Activated T-helper 2 cell treated with anti-CD3 and anti-CD28 coated beads, Interferon-gamma antibody, Interleukin-2, Interleukin-4, amounts not matched to agents 10 μg/mL and 5 μg/mL and 100 μg/mL, durations not matched to agents 14 hours and 24 hours and 36 hours (primary cell): ENCODE measurements at regions of chr12 and their contacts with region 1.

Region 1: DNA sequence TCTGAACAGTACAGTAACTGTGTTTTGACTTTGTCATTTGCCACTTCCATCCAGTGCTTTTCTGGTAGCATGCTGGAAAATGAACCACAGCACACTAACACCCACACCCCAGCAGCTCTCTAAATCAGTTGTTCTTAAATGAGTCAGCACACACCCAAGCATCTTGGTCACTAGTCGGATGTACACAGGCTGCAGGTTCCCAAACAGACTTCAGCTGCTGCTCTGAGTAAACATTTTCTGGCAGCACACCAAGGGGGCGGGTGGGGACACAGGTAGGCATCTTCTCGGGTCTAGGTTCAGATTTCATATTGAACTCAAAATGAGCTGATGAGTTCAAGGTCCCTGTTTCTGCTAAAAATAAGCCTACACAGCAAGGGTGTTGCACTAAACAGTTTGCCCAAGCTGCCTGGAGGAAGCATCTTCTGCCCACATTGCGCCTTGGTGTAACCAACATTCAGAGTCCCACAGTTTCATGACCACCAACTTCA is 39.8 kb downstream of the IFNG start:
- DNase-seq: peak; percentile 62
- H3K4me3 Mint-ChIP-seq: peak overlapping the region; percentile 11
- H3K27ac Mint-ChIP-seq: peak overlapping the region; percentile 77
- H3K4me1 Mint-ChIP-seq: peaks cover 38% of the 10 kb centered on the region
- H3K27me3 Mint-ChIP-seq: no peaks in the 10 kb centered on the region

Region 2: DNA sequence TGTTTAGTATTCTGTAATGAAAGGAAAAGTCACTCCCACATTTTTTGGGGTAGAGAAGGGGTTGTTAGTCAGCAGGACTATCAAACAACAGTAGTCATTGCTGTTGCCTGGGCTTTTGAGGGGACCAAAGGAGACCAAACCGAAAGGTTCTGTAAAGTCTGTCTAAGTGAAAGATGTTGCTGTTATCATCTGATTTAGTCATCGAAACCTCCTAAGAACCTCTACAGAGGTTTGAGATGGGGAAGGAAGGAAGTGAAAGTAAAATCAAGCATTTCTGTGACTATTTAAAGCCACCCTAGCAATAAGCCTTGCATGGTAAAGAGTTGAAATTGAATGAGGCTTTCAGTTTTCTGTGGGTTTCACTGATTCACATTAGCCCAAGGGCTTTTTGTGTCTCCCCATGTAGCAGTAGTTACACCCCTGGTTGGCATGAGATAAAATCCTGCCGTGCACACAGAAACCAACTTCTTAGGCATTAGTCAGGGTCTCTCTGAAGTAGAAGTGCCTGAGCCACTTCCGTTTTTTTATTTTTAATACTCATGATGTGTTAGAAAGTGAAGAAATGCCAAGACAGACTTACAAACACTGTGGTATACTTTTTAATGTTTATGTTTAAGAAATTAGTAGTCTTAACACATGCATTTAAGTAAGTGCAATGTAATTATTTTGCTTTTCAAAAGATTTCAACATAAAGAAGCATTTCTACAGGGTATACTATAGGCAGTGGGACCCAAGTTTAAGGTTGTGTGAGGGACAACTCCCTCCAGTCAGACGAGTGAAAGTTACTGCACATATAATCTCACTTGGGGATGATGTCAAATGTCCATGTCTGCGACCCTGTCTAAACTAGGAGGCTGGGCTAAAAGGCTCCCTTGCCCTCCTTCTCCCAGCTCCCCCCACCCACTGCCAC is 420.8 kb before region 1 on chr12:
- intact Hi-C with region 1: loop called (anchors 1 kb)
- DNase-seq: peak; percentile 56
- H3K4me3 Mint-ChIP-seq: no peak overlapping the region
- H3K27ac Mint-ChIP-seq: peak overlapping the region; percentile 55
- H3K4me1 Mint-ChIP-seq: peaks cover 46% of the 10 kb centered on the region
- H3K27me3 Mint-ChIP-seq: peaks cover 50% of the 10 kb centered on the region

Region 3: DNA sequence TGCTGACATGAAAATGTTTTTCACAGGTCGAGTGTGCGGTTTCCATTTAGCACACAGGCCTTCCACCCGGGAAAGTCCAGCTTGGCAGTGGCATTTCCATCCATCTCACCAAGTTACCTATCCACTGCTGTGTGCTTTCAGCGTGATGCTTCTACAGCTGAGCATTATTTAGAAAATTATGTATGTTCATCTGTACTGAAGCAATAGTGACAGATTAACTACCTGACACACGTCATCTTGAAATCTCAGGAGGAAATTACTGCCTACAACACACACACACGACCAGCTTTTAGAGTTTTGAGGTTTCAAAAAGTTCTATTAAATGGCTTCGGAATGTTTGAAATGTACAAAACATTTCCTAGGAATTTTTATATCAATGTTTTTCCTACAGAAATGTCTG is 91.1 kb before region 1 on chr12:
- intact Hi-C with region 1: no loop called
- DNase-seq: no peak
- H3K4me3 Mint-ChIP-seq: no peak overlapping the region
- H3K27ac Mint-ChIP-seq: no peak overlapping the region
- H3K4me1 Mint-ChIP-seq: peaks cover 19% of the 10 kb centered on the region
- H3K27me3 Mint-ChIP-seq: no peaks in the 10 kb centered on the region

Region 4: DNA sequence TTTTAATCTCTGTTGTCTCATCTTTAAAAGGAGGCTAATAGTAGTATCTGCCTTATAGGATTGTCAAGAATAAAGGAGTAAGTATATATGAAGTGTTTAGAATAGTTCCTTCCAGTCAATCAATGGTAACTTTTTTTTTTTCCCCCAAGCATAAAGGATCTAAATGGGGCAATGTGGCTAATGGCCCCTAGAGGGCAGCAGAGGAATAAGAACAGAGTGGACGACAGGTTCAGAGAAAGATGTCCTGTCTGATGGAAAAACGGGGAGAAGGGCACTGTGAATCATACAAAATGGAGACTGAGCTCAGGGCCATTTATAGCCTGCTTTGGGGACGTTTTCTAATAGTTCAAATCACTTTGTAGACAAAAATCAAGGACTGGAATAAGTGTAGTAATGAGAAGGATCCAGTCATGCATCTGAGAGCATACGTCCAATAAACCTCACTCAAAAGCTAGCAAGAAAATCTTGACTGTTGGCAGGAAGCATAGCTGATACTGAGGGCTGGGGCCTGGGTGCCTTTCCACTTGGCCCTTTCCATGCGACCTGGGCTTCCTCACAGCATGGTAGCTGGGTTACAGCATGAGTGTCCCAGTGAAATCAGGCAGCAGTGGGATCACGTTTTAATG is 79.2 kb before region 1 on chr12:
- intact Hi-C with region 1: loop called (anchors 1 kb)
- DNase-seq: peak; percentile 44
- H3K4me3 Mint-ChIP-seq: no peak overlapping the region
- H3K27ac Mint-ChIP-seq: no peak overlapping the region
- H3K4me1 Mint-ChIP-seq: peaks cover 32% of the 10 kb centered on the region
- H3K27me3 Mint-ChIP-seq: no peaks in the 10 kb centered on the region

Region 5: DNA sequence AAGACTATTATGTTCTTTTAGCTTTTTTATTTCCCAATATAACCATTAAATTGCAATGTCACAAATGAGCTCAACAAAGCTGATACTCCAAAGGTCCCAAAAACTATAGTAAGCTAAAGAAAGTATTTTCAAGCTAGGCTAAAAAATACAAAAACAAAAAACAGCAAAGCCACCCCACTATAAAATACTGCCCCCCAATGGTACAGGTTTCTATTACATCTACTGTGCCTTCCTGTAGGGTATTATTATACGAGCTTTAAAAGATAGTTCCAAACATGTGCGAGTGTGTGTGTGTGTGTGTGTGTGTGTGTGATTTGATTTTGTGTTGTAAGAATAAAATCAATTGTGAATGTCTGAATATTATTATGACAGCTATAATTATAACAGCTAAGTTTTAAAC is 38.7 kb after region 1 on chr12:
- intact Hi-C with region 1: loop called (anchors 1 kb)
- DNase-seq: no peak
- H3K4me3 Mint-ChIP-seq: peak overlapping the region; percentile 13
- H3K27ac Mint-ChIP-seq: no peak overlapping the region
- H3K4me1 Mint-ChIP-seq: peaks cover 35% of the 10 kb centered on the region
- H3K27me3 Mint-ChIP-seq: no peaks in the 10 kb centered on the region

Region 6: GRCh38 chr12:68200854-68201253 is 81.1 kb after region 1 on chr12:
- intact Hi-C with region 1: loop called (anchors 1 kb)
- DNase-seq: no peak
- H3K4me3 Mint-ChIP-seq: no peak overlapping the region
- H3K27ac Mint-ChIP-seq: no peak overlapping the region
- H3K4me1 Mint-ChIP-seq: peaks cover 42% of the 10 kb centered on the region
- H3K27me3 Mint-ChIP-seq: peaks cover 44% of the 10 kb centered on the region

Region 7: GRCh38 chr12:68451261-68452077 is 331.7 kb after region 1 on chr12:
- intact Hi-C with region 1: loop called (anchors 5 kb)
- DNase-seq: peak; percentile 55
- H3K4me3 Mint-ChIP-seq: peak overlapping the region; percentile 43
- H3K27ac Mint-ChIP-seq: peak overlapping the region; percentile 95
- H3K4me1 Mint-ChIP-seq: peaks cover 78% of the 10 kb centered on the region
- H3K27me3 Mint-ChIP-seq: no peaks in the 10 kb centered on the region

Region 8: GRCh38 chr12:68610370-68611093 is 490.8 kb after region 1 on chr12 and contains the start of gene RAP1B:
- intact Hi-C with region 1: loop called (anchors 5 kb)
- DNase-seq: peak; percentile 88
- H3K4me3 Mint-ChIP-seq: peak within 1 kb of the TSS; percentile 94
- H3K27ac Mint-ChIP-seq: peak within 1 kb of the TSS; percentile 97
- H3K4me1 Mint-ChIP-seq: peaks cover 43% of the 10 kb centered on the region
- H3K27me3 Mint-ChIP-seq: no peaks in the 10 kb centered on the region
- total RNA-seq, gene RAP1B: 174 and 182 TPM in 2 replicates